ENCODE measurements at regions of chr17 and their contacts with region 1.

Region 1: GRCh38 chr17:28008542-28008941 is 33.9 kb upstream of the NLK start:
- DNase-seq: peak; percentile 30 to 54
- H3K4me3 ChIP-seq: no peak overlapping the region
- H3K27ac ChIP-seq: no peak overlapping the region
- H3K4me1 ChIP-seq: no peaks in the 10 kb centered on the region
- H3K27me3 ChIP-seq: peaks cover 47% of the 10 kb centered on the region
- CTCF ChIP-seq: no peak

Region 2: DNA sequence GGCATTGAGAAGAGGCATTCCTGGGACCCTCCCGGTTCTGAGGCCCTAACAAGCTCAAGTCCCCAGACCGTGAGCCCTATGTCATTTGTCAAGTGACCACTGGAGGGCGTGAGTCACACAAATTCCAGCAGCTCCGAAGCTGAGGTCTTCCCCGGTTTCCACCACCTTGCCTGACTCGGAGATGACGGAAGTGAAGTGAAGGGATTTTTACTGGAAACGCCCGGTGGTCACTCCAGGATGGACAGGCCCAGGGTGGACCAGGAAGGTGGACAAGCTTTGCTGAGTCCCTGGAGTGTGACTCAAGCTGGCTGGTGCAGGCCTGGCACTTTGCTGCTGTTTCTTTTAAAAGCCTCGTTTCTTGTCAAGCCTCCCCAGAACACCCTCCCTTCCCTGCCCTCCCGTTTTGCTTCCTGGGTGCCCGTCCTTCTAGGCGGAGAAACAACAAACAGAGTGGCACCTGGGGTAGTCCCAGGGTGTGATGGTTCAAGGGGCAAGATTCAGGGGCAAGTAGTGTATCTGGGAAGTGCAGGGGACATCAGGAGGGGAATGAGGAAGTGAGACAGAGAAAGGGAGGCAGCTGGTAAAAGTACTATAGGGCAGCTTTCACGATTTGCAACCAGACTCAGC is 202.9 kb before region 1 on chr17:
- CTCF ChIA-PET with region 1: no interaction called
- POLR2A ChIA-PET with region 1: no interaction called
- intact Hi-C with region 1: no loop called
- DNase-seq: peak; percentile 75 to 81
- H3K4me3 ChIP-seq: peak overlapping the region; percentile 18; the same call in 1 of the 2 replicates
- H3K27ac ChIP-seq: no peak overlapping the region
- H3K4me1 ChIP-seq: no peaks in the 10 kb centered on the region; the same call in 1 of the 2 replicates
- H3K27me3 ChIP-seq: peaks cover 3% of the 10 kb centered on the region; the same call in 1 of the 2 replicates
- CTCF ChIP-seq: peak; percentile 85

Region 3: GRCh38 chr17:27980043-27980442 is 28.5 kb before region 1 on chr17:
- CTCF ChIA-PET with region 1: no interaction called
- POLR2A ChIA-PET with region 1: interaction called, 46 read pairs
- intact Hi-C with region 1: no loop called
- DNase-seq: peak; percentile 42 to 48
- H3K4me3 ChIP-seq: no peak overlapping the region
- H3K27ac ChIP-seq: peak overlapping the region; percentile 55; the same call in 1 of the 2 replicates
- H3K4me1 ChIP-seq: peaks cover 20% of the 10 kb centered on the region
- H3K27me3 ChIP-seq: no peaks in the 10 kb centered on the region
- CTCF ChIP-seq: no peak

Region 4: DNA sequence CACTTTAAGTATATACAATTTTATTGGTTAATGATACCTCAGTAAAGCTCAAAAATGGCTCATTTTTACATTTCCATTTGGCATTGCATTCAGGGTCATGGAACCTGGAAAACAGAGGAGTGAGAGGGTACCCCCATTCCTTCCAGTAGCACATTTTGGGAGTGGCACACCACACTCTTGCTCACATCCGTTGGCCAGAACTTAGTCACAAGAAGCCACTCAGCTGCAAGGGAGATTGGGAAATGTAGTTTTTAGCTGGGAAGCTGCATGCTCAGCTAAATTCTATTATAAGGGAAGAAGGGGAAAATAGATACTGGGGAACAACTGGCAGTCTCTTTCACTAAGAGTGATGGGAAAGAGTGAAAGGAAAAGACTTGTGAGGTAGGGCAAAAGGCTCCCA is 208.0 kb after region 1 on chr17:
- CTCF ChIA-PET with region 1: no interaction called
- POLR2A ChIA-PET with region 1: no interaction called
- intact Hi-C with region 1: no loop called
- DNase-seq: no peak
- H3K4me3 ChIP-seq: no peak overlapping the region
- H3K27ac ChIP-seq: no peak overlapping the region
- H3K4me1 ChIP-seq: no peaks in the 10 kb centered on the region; the same call in 1 of the 2 replicates
- H3K27me3 ChIP-seq: no peaks in the 10 kb centered on the region
- CTCF ChIP-seq: no peak